ENCODE measurements at regions of chr19 and their contacts with region 1.

Region 1: DNA sequence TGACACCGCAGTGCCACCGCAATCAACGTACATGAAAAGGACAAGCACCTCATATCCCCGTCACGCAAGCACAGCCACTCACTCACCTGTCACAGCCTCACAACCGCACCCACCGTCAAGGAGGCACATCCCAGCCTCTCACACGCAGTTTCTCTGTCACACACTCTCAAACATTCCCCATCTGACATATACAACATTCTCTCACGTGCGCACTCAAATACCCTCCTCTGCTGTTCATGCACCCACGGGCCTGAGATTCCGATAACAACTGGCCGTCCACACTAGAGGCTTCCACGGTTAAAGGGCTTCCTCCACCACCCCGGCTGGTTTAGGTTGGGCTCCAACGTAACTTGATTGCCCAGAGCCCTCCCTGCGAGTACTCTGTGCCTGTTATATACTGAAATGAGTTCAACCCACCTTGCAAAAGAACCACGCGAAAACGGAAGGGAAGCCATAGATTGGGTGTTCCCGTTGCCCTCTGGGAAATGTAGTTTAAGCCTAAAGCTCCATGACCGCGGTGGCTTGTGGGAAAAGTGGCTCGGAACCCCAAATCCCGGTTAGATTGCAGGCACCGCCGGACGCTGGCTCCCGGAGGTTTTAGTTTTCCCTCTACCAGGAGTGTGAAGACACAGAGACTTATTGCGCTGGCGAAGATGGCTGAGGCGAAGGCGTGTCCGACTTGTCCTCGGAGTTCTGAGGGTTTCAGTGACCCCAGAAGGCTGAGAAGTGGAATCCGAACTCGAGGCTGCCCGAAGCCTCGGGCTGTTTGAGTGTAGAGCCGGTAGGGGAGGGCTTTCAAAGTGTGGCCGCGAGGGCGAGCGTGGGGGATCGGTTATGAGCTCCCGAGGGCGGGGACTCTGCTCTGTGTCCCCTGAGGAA is at the start of gene ZNF573:
- DNase-seq: peak; percentile 76 to 97 (median 88)

Region 2: DNA sequence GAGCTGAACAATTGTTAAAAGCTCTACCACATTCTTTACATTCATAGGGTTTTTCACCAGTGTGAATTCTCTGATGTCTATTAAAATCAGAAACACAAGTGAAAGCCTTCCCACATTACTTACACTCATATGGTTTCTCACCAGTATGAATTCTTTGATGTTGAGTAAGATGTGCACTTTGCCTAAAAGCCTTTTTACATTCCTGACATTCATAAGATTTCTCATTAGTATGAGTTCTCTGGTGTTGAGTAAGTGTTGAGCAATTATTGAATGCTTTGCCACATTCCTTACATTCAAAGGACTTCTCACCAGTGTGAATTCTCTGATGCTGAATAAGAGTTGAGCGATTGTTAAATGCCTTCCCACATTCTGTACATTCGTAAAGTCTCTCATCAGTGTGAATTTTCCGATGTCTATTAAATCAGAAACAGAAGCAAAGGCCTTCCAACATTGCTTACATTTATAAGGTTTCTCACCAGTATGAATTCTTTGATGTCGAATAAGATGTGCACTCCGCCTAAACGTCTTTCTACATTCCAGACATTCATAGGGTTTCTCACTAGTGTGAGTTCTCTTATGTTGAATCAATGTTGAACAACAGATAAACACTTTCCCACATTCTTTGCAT is 109.9 kb before region 1 on chr19:
- intact Hi-C with region 1: no loop called
- DNase-seq: no peak

Region 3: DNA sequence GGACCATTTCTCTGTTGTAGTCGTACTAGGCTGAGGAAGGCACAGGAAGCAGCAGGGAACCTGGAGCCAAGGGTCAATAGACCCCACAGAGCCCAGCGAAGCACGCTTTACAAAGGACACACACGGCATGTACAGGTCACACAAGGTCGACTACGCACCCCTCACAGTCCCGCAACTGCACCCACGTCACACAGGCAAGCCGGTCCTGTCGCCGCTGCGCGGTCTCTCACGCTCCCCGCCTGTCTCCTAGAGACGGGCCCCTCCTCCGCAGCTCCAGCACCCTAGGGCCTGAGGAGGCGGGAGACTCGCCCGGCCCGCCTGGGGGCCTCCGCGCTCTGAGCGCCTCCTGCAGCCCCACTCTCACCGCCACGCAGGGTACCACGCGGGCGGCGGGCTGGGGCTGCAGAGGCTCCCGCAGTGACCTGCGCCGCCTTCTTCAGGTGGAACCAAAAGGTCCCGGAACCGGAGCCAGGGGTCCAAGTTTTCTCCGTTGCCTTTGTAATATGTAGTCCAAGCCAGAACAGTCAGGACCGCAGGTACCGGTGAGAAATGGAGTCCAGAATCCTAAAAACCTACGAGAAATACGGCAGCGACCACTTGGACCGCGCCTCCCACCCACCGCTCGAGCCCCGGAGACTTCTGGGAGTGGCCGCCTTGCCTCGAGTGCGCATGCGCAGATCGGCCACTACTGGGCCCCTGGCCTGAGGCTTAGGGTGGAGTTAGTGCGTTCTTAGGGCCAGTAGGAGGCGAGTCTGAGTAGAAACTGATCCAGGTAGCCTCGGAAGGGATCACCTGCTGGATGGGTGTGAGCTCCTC is 60.0 kb before region 1 on chr19 and contains the start of gene ZNF607:
- intact Hi-C with region 1: loop called (anchors 1 kb)
- DNase-seq: peak; percentile 85 to 98 (median 90)

Region 4: DNA sequence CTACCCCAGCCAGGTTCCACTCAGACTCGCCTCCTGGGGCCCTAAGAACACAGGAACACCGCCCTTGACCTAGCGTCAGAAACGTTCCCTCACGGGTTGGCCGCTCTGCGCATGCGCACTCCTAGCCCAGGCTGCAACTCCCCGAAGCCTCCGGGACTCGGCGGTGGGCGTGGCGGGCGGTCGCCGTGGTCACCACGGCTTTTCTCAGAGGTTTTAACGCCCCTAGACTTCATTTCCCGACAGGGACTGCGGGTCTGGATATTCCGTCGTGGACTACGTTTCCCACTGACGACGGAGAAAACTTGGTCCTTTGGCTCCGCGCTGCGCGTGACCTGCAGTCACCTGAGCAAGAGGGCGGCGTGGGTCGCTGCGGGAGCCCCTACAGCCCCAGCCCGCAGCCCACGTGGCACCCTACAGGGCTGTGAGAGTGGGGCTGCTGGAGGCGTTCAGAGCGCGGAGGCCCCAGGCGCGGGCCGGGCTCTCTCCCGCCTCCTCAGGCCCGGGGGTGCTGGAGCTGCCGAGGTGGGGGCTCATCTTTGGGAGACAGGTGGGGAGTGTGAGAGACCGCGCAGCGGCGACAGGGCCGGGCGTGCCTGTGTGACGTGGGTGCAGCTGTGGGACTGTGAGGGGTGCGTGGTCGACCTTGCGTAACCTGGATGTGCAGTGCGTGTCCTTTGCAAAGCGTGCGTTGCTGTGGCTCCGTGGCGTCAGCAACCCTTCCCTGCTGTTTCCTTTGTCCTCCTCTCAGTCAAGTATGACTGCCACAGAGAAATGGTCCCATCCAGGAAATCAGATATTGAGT is 38.0 kb after region 1 on chr19:
- intact Hi-C with region 1: loop called (anchors 2 kb)
- DNase-seq: peak; percentile 53 to 95 (median 72)